ENCODE measurements at regions of chr19 and their contacts with region 1.

Region 1: DNA sequence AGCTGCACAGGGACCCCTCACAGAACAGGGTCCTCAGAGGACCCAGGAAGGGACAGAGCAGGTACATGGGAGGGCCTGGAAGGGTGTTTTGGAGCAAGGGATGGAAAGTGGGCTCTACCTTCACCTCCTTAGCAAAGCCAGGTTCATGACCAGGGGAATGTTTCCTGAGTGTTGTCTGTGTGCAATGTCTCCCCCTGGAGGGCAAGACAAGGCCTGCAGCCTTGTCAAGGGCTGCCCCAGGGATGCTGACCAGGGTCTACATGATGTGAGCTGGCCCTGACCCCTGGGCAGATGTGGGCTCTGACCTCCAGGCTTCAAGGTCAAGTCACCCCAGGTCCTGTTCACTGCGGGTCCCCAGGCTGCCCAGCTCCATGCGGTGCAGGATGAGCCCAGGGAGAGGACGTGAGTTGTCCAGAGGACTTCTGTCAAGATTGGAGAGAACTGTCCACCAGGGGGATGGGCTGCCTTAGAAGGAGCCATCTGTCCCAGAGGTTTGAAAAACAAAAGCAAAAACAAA is 1.0 kb upstream of the CEACAM1 start:
- DNase-seq: peak; percentile 80
- ATAC-seq: peak; percentile 61
- H3K4me3 Mint-ChIP-seq: peak overlapping the region; percentile 99
- H3K27ac Mint-ChIP-seq: peak overlapping the region; percentile 92
- H3K4me1 Mint-ChIP-seq: peaks cover 49% of the 10 kb centered on the region
- H3K27me3 Mint-ChIP-seq: peaks cover 4% of the 10 kb centered on the region

Region 2: GRCh38 chr19:42450314-42450934 is 78.9 kb before region 1 on chr19:
- POLR2A ChIA-PET with region 1: interaction called, 34 read pairs
- DNase-seq: peak; percentile 69
- ATAC-seq: peak; percentile 98
- H3K4me3 Mint-ChIP-seq: no peak overlapping the region
- H3K27ac Mint-ChIP-seq: no peak overlapping the region
- H3K4me1 Mint-ChIP-seq: peaks cover 39% of the 10 kb centered on the region
- H3K27me3 Mint-ChIP-seq: no peaks in the 10 kb centered on the region

Region 3: GRCh38 chr19:42657556-42657955 is 128.2 kb after region 1 on chr19:
- POLR2A ChIA-PET with region 1: no interaction called
- DNase-seq: no peak
- ATAC-seq: no peak
- H3K4me3 Mint-ChIP-seq: no peak overlapping the region
- H3K27ac Mint-ChIP-seq: no peak overlapping the region
- H3K4me1 Mint-ChIP-seq: no peaks in the 10 kb centered on the region
- H3K27me3 Mint-ChIP-seq: no peaks in the 10 kb centered on the region